IMR-90 (cell line): ENCODE measurements at regions of chr11 and their contacts with region 1.

Region 1: GRCh38 chr11:60970369-60970774 is 1.1 kb upstream of the CD6 start:
- DNase-seq: peak; percentile 29
- ATAC-seq: peak; percentile 97
- H3K4me3 ChIP-seq: no peak overlapping the region
- H3K27ac ChIP-seq: no peak overlapping the region
- H3K4me1 ChIP-seq: no peaks in the 10 kb centered on the region
- H3K27me3 ChIP-seq: peaks cover 45% of the 10 kb centered on the region
- CTCF ChIP-seq: peak; percentile 73
- POLR2A ChIP-seq: no peak
- RAD21 ChIP-seq: peak; percentile 72

Region 2: GRCh38 chr11:60944490-60945294 is 25.7 kb before region 1 on chr11:
- CTCF ChIA-PET with region 1: no interaction called
- POLR2A ChIA-PET with region 1: no interaction called
- dilution Hi-C with region 1: no loop called
- in situ Hi-C with region 1: no loop called
- intact Hi-C with region 1: no loop called
- DNase-seq: no peak
- ATAC-seq: no peak
- H3K4me3 ChIP-seq: no peak overlapping the region
- H3K27ac ChIP-seq: no peak overlapping the region
- H3K4me1 ChIP-seq: peaks cover 4% of the 10 kb centered on the region; the same call in 1 of the 2 replicates
- H3K27me3 ChIP-seq: no peaks in the 10 kb centered on the region
- CTCF ChIP-seq: no peak
- POLR2A ChIP-seq: no peak
- RAD21 ChIP-seq: no peak

Region 3: DNA sequence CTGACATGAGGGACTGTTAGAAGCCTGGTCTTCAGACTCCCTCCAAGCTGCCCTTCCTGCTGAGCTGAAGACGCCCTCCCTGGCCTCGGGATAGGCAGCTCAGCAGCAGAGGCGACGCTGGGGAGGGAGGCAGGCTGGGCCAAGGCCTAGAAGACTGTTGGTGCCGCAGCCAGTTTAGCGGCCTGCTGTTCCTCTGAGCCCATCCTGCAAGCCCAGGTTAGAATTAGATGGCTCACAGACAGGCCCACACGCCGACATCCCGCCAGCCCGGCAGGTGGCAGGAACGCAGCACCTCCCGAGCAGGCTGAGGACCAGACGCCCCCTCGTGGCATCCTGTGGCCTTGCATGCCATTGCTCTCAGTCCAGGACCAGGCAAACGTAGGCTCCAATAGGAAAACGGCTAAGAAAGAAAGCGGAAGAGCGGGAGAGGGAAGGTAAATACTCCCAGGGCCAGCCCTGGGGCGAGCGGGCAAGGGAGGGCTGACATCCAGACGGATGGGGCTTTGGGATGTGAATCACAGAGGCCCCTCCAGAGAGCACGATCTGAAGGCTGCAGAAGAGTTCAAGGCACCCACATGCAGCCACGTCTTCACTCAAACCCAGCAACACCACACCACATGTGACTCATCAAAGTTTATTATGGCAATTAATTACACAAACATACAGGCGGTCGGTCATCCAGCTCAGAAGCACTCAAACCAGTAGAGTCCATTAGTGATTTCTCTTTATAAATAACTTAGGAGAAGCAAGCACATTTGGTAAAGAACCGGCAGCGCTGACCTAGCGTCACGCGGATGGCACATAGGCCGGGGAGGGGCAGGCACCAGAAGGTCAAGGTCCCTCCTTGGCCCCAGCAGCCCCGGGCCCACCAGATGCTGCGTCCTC is 159.5 kb after region 1 on chr11:
- CTCF ChIA-PET with region 1: no interaction called
- POLR2A ChIA-PET with region 1: no interaction called
- dilution Hi-C with region 1: no loop called
- in situ Hi-C with region 1: no loop called
- intact Hi-C with region 1: loop called (anchors 2 kb)
- DNase-seq: peak; percentile 93
- ATAC-seq: peak; percentile 96
- H3K4me3 ChIP-seq: peak overlapping the region; percentile 11; the same call in 1 of the 2 replicates
- H3K27ac ChIP-seq: peak overlapping the region; percentile 18
- H3K4me1 ChIP-seq: peaks cover 10% of the 10 kb centered on the region
- H3K27me3 ChIP-seq: peaks cover 5% of the 10 kb centered on the region; the same call in 1 of the 2 replicates
- CTCF ChIP-seq: peak; percentile 100
- POLR2A ChIP-seq: peak; percentile 39; the same call in 1 of the 2 replicates
- RAD21 ChIP-seq: peak; percentile 93

Region 4: DNA sequence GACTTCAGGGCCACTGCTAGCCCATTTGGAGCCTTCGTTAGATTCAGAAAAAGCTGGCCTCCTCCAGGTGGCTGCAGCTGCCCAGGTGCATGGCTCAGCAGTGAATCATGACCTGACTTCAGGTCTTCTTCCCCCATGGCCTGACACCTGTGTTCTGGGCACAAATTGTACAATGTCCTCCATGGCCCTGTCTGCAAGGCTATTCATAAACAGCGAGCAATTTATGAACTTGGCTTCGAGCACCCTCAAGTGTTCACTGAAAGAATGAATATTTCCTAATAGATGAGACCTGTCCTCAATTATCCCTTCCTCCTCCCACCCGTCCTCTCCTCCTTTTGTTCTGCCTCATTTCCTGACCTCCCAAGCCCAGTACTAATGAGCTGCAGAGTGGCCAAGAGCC is 203.1 kb after region 1 on chr11:
- CTCF ChIA-PET with region 1: no interaction called
- POLR2A ChIA-PET with region 1: no interaction called
- dilution Hi-C with region 1: no loop called
- in situ Hi-C with region 1: no loop called
- intact Hi-C with region 1: loop called (anchors 1 kb)
- DNase-seq: peak; percentile 34
- ATAC-seq: peak; percentile 49
- H3K4me3 ChIP-seq: no peak overlapping the region
- H3K27ac ChIP-seq: no peak overlapping the region
- H3K4me1 ChIP-seq: no peaks in the 10 kb centered on the region
- H3K27me3 ChIP-seq: peaks cover 59% of the 10 kb centered on the region
- CTCF ChIP-seq: peak; percentile 53
- POLR2A ChIP-seq: no peak
- RAD21 ChIP-seq: peak; percentile 57